ENCODE measurements at regions of chr5 and their contacts with region 1.

Region 1: GRCh38 chr5:150700594-150701293 is at the start of gene RBM22:
- DNase-seq: peak; percentile 95
- ATAC-seq: peak; percentile 96
- H3K4me3 Mint-ChIP-seq: no peak within 1 kb of the TSS
- H3K27ac Mint-ChIP-seq: no peak within 1 kb of the TSS
- H3K4me1 Mint-ChIP-seq: peaks cover 2% of the 10 kb centered on the region
- H3K27me3 Mint-ChIP-seq: no peaks in the 10 kb centered on the region
- total RNA-seq, gene RBM22: 64.0 to 65.2 TPM

Region 2: GRCh38 chr5:150473673-150474358 is 226.9 kb before region 1 on chr5:
- CTCF ChIA-PET with region 1: no interaction called
- POLR2A ChIA-PET with region 1: no interaction called
- DNase-seq: no peak
- ATAC-seq: no peak
- H3K4me3 Mint-ChIP-seq: no peak overlapping the region
- H3K27ac Mint-ChIP-seq: no peak overlapping the region
- H3K4me1 Mint-ChIP-seq: peaks cover 9% of the 10 kb centered on the region
- H3K27me3 Mint-ChIP-seq: no peaks in the 10 kb centered on the region

Region 3: DNA sequence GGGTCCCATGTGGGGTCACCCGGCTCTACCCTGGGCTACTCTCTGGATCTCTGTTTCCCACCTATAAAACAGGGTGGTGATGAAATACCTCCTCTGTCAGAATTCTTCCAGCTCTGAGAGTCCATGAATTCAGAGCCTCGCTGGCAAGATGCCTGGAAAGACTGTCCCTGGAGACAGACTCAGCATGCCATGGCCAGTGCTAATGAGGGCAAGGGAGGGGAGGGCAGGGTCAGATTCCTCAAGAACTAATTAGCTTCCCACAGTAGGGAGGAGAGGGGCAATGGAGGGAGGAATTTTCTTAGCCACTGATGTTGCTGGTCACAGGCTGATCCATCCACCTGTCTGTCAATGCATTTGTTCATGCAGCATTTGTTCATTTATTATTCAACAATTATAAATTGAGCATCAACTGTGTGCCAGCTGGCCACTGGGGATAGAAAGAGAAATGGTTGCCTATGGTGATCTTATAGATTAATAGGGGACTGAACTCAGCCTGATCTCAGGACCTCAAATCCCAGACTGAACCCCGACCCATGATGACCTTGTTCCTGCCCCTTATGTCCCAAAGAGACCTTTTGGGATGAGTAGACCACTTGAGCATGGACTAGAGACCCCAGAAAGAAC is 55.6 kb before region 1 on chr5:
- CTCF ChIA-PET with region 1: no interaction called
- POLR2A ChIA-PET with region 1: no interaction called
- DNase-seq: no peak
- ATAC-seq: no peak
- H3K4me3 Mint-ChIP-seq: no peak overlapping the region
- H3K27ac Mint-ChIP-seq: no peak overlapping the region
- H3K4me1 Mint-ChIP-seq: no peaks in the 10 kb centered on the region
- H3K27me3 Mint-ChIP-seq: no peaks in the 10 kb centered on the region

Region 4: DNA sequence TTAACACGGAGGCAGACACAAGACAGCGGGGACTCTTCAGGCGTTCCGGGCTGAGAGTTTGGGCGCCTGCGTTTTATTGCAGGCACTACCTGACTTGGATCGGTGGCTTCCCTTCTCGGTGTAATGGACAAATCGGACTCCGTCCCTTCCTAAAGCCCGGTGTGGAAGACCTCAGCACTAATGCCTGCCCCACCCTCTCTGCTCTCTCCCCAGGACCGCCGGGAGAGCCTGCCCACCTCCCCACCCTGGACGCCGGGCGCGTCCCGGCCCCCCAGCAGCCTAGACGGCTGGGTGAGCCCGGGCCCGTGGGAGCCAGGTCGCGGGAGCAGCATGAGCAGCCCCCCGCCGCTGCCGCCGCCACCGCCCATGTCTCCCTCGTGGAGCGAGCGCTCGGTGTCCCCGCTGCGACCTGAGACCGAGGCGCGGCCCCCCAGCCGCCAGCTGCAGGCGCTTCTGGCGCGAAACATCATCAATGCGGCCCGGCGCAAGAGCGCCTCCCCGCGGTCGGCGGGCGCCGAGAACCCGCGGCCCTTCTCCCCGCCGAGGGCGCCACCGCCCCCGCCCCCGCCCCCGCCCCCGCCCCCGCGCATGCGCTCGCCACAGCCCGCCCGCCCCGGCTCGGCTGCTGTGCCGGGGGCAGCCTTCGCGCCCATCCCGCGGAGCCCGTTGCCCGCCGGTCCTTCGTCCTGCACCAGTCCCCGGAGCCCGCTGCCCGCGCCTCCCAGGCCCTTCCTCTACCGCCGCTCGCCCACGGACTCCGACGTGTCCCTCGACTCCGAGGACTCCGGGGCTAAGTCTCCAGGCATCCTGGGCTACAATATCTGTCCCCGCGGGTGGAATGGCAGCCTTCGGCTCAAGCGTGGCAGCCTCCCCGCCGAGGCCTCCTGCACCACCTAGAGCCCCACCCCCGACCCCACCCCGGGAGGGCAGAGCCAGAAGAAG is 44.3 kb before region 1 on chr5:
- CTCF ChIA-PET with region 1: interaction called, 3 read pairs
- POLR2A ChIA-PET with region 1: interaction called, 10 read pairs
- DNase-seq: peak; percentile 85
- ATAC-seq: peak; percentile 86
- H3K4me3 Mint-ChIP-seq: peak overlapping the region; percentile 72
- H3K27ac Mint-ChIP-seq: peak overlapping the region; percentile 67
- H3K4me1 Mint-ChIP-seq: peaks cover 11% of the 10 kb centered on the region
- H3K27me3 Mint-ChIP-seq: peaks cover 4% of the 10 kb centered on the region

Region 5: DNA sequence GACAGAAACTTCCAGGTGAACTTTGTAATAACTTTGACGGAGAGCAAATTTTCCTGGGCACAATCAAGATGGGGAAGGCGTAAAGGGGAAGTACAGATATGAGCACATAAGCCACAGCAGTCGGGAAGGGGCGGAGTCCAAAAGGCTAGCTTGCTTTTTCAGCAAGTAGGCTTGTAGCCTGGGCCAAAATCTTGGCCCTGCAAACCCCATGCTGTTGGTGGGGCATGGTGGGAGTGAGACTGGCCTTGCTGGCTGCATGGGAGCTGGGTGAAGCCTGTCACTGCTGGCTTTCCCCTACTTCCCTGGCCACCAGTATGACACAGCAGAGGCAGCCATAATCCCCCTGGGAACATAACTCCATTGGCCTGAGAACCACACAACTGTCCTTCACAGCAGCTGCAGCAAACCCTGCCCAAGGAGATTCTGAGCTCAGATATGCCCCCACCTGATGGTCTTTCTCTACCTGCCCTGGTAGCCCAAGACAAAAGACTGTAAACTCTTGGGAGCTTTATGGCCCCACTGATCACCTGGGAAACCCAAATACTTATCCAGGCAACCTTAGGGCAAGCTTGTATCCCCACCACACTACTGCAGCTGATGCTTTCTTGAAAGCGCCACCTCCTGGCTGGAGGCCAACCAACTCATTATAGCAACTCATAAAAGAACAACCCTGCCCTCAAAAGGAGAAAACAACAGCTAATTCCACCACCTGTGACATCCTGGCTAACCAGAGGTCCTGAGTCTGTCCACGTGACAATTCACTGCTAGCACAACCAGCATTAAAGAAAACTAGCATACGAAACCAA is 34.0 kb after region 1 on chr5:
- CTCF ChIA-PET with region 1: interaction called, 30 read pairs
- POLR2A ChIA-PET with region 1: interaction called, 7 read pairs
- DNase-seq: no peak
- ATAC-seq: no peak
- H3K4me3 Mint-ChIP-seq: no peak overlapping the region
- H3K27ac Mint-ChIP-seq: peak overlapping the region; percentile 19
- H3K4me1 Mint-ChIP-seq: peaks cover 50% of the 10 kb centered on the region
- H3K27me3 Mint-ChIP-seq: no peaks in the 10 kb centered on the region

Region 6: GRCh38 chr5:150758531-150759333 is 58.0 kb after region 1 on chr5 and contains the start of gene DCTN4:
- CTCF ChIA-PET with region 1: interaction called, 15 read pairs
- POLR2A ChIA-PET with region 1: interaction called, 18 read pairs
- DNase-seq: peak; percentile 95
- ATAC-seq: peak; percentile 98
- H3K4me3 Mint-ChIP-seq: no peak within 1 kb of the TSS
- H3K27ac Mint-ChIP-seq: no peak within 1 kb of the TSS
- H3K4me1 Mint-ChIP-seq: peaks cover 30% of the 10 kb centered on the region
- H3K27me3 Mint-ChIP-seq: no peaks in the 10 kb centered on the region
- total RNA-seq, gene DCTN4: 35.0 to 35.4 TPM

Region 7: DNA sequence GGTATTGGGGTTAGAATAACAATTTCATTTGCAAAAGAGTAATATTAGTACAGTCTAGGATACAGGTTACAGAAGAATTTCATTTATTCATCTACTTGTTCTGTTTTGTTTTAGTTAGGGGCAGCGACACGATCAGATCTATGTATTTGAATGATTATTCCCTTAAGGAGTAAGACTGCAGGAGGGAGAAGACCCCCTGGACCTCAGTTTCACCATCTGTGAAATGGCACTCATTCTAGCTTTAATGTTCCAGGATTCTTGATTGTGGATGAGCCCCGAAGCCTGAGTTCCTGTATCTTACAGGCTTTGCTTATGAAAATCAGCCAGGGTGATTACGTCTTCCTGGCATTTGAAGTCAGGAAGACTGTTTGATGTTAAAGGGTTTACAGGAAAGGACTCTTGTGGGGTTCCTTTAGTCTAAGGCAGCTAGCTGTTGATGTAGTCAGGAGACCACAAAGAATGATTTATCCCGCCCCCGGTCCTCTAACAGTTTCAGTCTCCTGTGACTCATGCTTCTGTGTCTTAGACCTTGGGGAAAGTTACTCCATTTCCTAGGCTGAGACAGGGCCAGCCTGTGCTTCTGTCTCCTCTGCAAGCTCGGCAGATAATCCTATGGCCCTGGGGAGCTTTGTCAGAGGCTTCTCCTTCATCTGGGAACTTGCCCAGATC is 89.3 kb after region 1 on chr5:
- CTCF ChIA-PET with region 1: interaction called, 12 read pairs
- POLR2A ChIA-PET with region 1: interaction called, 10 read pairs
- DNase-seq: peak; percentile 78
- ATAC-seq: peak; percentile 98
- H3K4me3 Mint-ChIP-seq: peak overlapping the region; percentile 54
- H3K27ac Mint-ChIP-seq: peak overlapping the region; percentile 86
- H3K4me1 Mint-ChIP-seq: peaks cover 50% of the 10 kb centered on the region
- H3K27me3 Mint-ChIP-seq: no peaks in the 10 kb centered on the region

Measured in activated CD8-positive, alpha-beta T cell treated with anti-CD3 and anti-CD28 coated beads, Interleukin-2, amount 10 ng/mL, durations not matched to agents 7 days and 5 days (primary cell).